Activated T-helper 2 cell treated with anti-CD3 and anti-CD28 coated beads, Interferon-gamma antibody, Interleukin-2, Interleukin-4, amounts not matched to agents 10 μg/mL and 5 μg/mL and 100 μg/mL, durations not matched to agents 14 hours and 24 hours and 36 hours (primary cell): ENCODE measurements at regions of chr10 and their contacts with region 1.

Region 1: DNA sequence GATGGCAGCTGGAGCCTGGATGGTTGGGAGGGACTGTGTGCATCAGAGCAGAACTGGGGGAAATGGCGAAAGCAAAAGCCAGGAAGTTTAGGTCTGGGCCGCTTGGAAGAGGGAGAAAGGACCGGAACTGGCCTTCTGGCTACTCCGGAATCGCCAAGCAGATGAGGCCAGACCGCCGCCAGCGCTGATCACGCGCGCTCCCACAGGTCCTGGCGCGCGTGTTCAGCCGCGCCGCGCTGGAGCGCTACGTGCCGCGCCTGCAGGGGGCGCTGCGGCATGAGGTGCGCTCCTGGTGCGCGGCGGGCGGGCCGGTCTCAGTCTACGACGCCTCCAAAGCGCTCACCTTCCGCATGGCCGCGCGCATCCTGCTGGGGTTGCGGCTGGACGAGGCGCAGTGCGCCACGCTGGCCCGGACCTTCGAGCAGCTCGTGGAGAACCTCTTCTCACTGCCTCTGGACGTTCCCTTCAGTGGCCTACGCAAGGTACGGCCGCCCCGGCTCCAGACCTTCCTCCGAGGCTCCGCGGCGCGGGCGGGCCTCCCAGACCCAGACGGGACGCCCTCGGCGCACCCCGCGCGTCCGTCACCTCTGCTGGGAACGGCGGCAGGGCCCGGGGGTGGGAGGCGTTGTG is 2.0 kb downstream of the CYP26C1 start:
- DNase-seq: peak; percentile 49
- H3K4me3 Mint-ChIP-seq: peak overlapping the region; percentile 64
- H3K27ac Mint-ChIP-seq: no peak overlapping the region
- H3K4me1 Mint-ChIP-seq: peaks cover 5% of the 10 kb centered on the region
- H3K27me3 Mint-ChIP-seq: peaks cover 64% of the 10 kb centered on the region

Region 2: GRCh38 chr10:92880233-92880861 is 182.3 kb before region 1 on chr10:
- intact Hi-C with region 1: loop called (anchors 10 kb)
- DNase-seq: no peak
- H3K4me3 Mint-ChIP-seq: no peak overlapping the region
- H3K27ac Mint-ChIP-seq: no peak overlapping the region
- H3K4me1 Mint-ChIP-seq: peaks cover 8% of the 10 kb centered on the region
- H3K27me3 Mint-ChIP-seq: peaks cover 1% of the 10 kb centered on the region

Region 3: DNA sequence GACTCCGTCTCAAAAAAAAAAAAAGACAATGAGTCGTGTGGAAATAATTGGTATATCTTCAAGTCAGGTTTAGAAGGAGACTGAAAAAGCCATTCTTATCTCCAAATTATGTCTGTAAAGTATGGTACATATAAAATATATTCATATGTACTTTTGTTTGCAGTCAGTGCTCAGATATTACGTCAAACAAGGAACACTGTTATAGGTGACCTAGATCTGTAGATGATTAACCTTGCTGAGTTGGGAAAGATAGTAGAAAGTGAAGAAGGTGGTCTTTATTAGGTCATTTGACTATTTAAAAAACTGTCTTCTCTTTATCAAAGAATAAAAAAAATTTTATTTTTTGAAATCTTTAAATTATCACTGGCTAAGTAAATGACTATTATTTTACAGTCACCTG is 46.9 kb before region 1 on chr10:
- intact Hi-C with region 1: no loop called
- DNase-seq: no peak
- H3K4me3 Mint-ChIP-seq: no peak overlapping the region
- H3K27ac Mint-ChIP-seq: no peak overlapping the region
- H3K4me1 Mint-ChIP-seq: no peaks in the 10 kb centered on the region
- H3K27me3 Mint-ChIP-seq: no peaks in the 10 kb centered on the region

Region 4: GRCh38 chr10:93073539-93074146 is 11.0 kb after region 1 on chr10 and contains the start of gene CYP26A1:
- intact Hi-C with region 1: loop called (anchors 1 kb)
- DNase-seq: no peak
- H3K4me3 Mint-ChIP-seq: peak within 1 kb of the TSS; percentile 75
- H3K27ac Mint-ChIP-seq: no peak within 1 kb of the TSS
- H3K4me1 Mint-ChIP-seq: peaks cover 20% of the 10 kb centered on the region
- H3K27me3 Mint-ChIP-seq: peaks cover 75% of the 10 kb centered on the region
- total RNA-seq, gene CYP26A1: not detected in 2 replicates

Region 5: DNA sequence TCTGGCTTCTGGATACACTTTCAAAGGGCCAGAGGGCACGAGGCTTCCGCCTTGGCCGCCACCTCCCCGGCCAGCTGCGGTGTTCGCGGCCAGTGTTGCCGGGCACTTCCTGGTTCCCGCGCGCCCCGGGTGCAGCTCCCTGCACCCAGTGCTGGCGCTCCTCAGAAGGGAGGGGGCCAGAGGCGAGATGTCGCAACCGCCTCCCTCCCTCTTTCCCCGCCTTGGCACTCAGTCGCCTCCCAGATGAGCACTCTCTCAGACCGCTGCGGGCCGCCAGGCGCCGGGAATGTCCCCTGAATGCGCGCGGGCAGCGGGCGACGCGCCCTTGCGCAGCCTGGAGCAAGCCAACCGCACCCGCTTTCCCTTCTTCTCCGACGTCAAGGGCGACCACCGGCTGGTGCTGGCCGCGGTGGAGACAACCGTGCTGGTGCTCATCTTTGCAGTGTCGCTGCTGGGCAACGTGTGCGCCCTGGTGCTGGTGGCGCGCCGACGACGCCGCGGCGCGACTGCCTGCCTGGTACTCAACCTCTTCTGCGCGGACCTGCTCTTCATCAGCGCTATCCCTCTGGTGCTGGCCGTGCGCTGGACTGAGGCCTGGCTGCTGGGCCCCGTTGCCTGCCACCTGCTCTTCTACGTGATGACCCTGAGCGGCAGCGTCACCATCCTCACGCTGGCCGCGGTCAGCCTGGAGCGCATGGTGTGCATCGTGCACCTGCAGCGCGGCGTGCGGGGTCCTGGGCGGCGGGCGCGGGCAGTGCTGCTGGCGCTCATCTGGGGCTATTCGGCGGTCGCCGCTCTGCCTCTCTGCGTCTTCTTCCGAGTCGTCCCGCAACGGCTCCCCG is 504.0 kb after region 1 on chr10 and contains the start of gene FFAR4:
- intact Hi-C with region 1: loop called (anchors 10 kb)
- DNase-seq: no peak
- H3K4me3 Mint-ChIP-seq: no peak within 1 kb of the TSS
- H3K27ac Mint-ChIP-seq: no peak within 1 kb of the TSS
- H3K4me1 Mint-ChIP-seq: no peaks in the 10 kb centered on the region
- H3K27me3 Mint-ChIP-seq: peaks cover 56% of the 10 kb centered on the region
- total RNA-seq, gene FFAR4: not detected in 2 replicates